MCF 10A (cell line): ENCODE measurements at regions of chr10 and their contacts with region 1.

Region 1: GRCh38 chr10:9608602-9609001 is 1409.1 kb upstream of the CELF2 start:
- DNase-seq: peak; percentile 27
- H3K4me3 Mint-ChIP-seq: no peak overlapping the region
- H3K27ac Mint-ChIP-seq: no peak overlapping the region
- H3K4me1 Mint-ChIP-seq: peaks cover 29% of the 10 kb centered on the region
- H3K27me3 Mint-ChIP-seq: no peaks in the 10 kb centered on the region
- CTCF ChIP-seq: peak; percentile 55

Region 2: GRCh38 chr10:9342885-9343570 is 265.6 kb before region 1 on chr10:
- CTCF ChIA-PET with region 1: no interaction called
- POLR2A ChIA-PET with region 1: no interaction called
- intact Hi-C with region 1: loop called (anchors 5 kb)
- DNase-seq: peak; percentile 59
- H3K4me3 Mint-ChIP-seq: no peak overlapping the region
- H3K27ac Mint-ChIP-seq: no peak overlapping the region
- H3K4me1 Mint-ChIP-seq: no peaks in the 10 kb centered on the region
- H3K27me3 Mint-ChIP-seq: no peaks in the 10 kb centered on the region
- CTCF ChIP-seq: peak; percentile 67

Region 3: DNA sequence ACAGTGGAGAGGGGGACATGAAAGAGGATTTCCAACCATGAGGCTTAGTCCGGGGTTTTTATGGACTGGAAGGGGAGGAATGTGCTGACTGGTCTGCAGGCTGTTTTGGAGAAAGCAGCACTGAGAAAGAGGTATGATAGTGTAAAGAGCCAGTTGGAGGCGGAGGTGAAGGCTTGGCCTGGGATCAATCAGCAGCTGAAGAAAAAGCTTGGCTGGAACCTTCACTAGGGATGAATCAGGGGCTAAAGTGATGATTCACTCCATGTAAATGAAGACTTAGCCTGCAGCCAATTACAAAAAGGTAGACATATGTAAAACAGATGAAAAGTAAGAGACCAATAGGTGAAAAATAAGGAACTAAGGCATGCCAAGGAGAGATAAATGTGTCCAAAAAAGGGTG is 171.5 kb before region 1 on chr10:
- CTCF ChIA-PET with region 1: no interaction called
- POLR2A ChIA-PET with region 1: no interaction called
- intact Hi-C with region 1: no loop called
- DNase-seq: peak; percentile 34
- H3K4me3 Mint-ChIP-seq: no peak overlapping the region
- H3K27ac Mint-ChIP-seq: no peak overlapping the region
- H3K4me1 Mint-ChIP-seq: no peaks in the 10 kb centered on the region
- H3K27me3 Mint-ChIP-seq: no peaks in the 10 kb centered on the region
- CTCF ChIP-seq: no peak

Region 4: GRCh38 chr10:9845075-9845474 is 236.5 kb after region 1 on chr10:
- CTCF ChIA-PET with region 1: no interaction called
- POLR2A ChIA-PET with region 1: no interaction called
- intact Hi-C with region 1: no loop called
- DNase-seq: no peak
- H3K4me3 Mint-ChIP-seq: no peak overlapping the region
- H3K27ac Mint-ChIP-seq: no peak overlapping the region
- H3K4me1 Mint-ChIP-seq: no peaks in the 10 kb centered on the region
- H3K27me3 Mint-ChIP-seq: no peaks in the 10 kb centered on the region
- CTCF ChIP-seq: no peak

Region 5: GRCh38 chr10:9860045-9860444 is 251.4 kb after region 1 on chr10:
- CTCF ChIA-PET with region 1: no interaction called
- POLR2A ChIA-PET with region 1: no interaction called
- intact Hi-C with region 1: loop called (anchors 5 kb)
- DNase-seq: no peak
- H3K4me3 Mint-ChIP-seq: no peak overlapping the region
- H3K27ac Mint-ChIP-seq: no peak overlapping the region
- H3K4me1 Mint-ChIP-seq: peaks cover 6% of the 10 kb centered on the region
- H3K27me3 Mint-ChIP-seq: no peaks in the 10 kb centered on the region
- CTCF ChIP-seq: no peak

Region 6: GRCh38 chr10:10677479-10677878 is 1068.9 kb after region 1 on chr10:
- CTCF ChIA-PET with region 1: interaction called, 16 read pairs
- POLR2A ChIA-PET with region 1: no interaction called
- intact Hi-C with region 1: loop called (anchors 1 kb)
- DNase-seq: peak; percentile 80
- H3K4me3 Mint-ChIP-seq: no peak overlapping the region
- H3K27ac Mint-ChIP-seq: no peak overlapping the region
- H3K4me1 Mint-ChIP-seq: no peaks in the 10 kb centered on the region
- H3K27me3 Mint-ChIP-seq: no peaks in the 10 kb centered on the region
- CTCF ChIP-seq: peak; percentile 67

Region 7: GRCh38 chr10:11472158-11472753 is 1863.7 kb after region 1 on chr10:
- CTCF ChIA-PET with region 1: no interaction called
- POLR2A ChIA-PET with region 1: no interaction called
- intact Hi-C with region 1: loop called (anchors 2 kb)
- DNase-seq: peak; percentile 71
- H3K4me3 Mint-ChIP-seq: no peak overlapping the region
- H3K27ac Mint-ChIP-seq: no peak overlapping the region
- H3K4me1 Mint-ChIP-seq: peaks cover 5% of the 10 kb centered on the region
- H3K27me3 Mint-ChIP-seq: no peaks in the 10 kb centered on the region
- CTCF ChIP-seq: peak; percentile 94